Ovary (tissue), 10 donors: ENCODE measurements at regions of chr11 and their contacts with region 1.

Region 1: DNA sequence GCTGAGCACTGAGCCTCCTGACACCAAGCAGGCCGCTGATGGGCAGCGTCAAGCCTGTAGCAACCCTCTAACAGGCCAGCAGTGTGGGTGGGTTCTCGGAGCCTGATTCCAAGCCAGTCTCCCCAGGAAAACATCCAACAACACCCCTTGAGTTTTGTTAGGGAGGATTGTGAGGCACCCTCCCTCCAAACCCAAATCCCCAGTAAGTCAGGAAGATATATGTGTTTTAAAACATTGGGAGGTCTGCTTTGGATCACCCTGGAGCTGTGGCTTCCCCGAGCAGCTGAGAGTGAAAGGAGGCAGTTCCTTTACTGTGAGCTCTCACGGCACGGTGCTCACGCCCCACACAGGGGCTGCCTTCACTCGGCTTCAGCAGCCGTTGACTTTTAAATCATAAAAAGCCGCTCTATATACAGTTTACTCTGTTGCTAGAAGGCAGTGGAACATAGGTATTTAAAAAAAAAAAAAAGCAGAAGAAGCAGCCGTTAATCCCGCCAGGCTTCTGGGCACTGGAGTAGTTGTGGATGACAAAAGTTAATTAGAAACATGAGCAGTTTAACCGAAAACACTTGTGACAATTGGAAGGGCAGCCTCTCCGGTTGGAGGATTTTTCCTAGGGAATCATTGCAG is 218.6 kb downstream of the NAV2 start:
- DNase-seq: peak in 4 of 5 donors; percentile 29 to 51 (median 44)
- H3K4me3 ChIP-seq: no peak overlapping the region
- H3K27ac ChIP-seq: peak overlapping the region; percentile 67 to 76
- H3K4me1 ChIP-seq: peaks cover 24% of the 10 kb centered on the region
- H3K27me3 ChIP-seq: no peaks in the 10 kb centered on the region
- CTCF ChIP-seq: no peak
- EP300 ChIP-seq: no peak
- POLR2A ChIP-seq: no peak

Region 2: GRCh38 chr11:19814421-19814820 is 116.8 kb before region 1 on chr11:
- intact Hi-C with region 1: no loop called
- DNase-seq: no peak
- H3K4me3 ChIP-seq: no peak overlapping the region
- H3K27ac ChIP-seq: no peak overlapping the region
- H3K4me1 ChIP-seq: no peaks in the 10 kb centered on the region
- H3K27me3 ChIP-seq: no peaks in the 10 kb centered on the region
- CTCF ChIP-seq: no peak
- EP300 ChIP-seq: no peak
- POLR2A ChIP-seq: no peak

Region 3: GRCh38 chr11:19951558-19952115 is 20.4 kb after region 1 on chr11:
- intact Hi-C with region 1: no loop called
- DNase-seq: no peak
- H3K4me3 ChIP-seq: no peak overlapping the region
- H3K27ac ChIP-seq: peak overlapping the region in 1 of 2 donors; percentile 36
- H3K4me1 ChIP-seq: peaks cover 4% of the 10 kb centered on the region
- H3K27me3 ChIP-seq: no peaks in the 10 kb centered on the region
- CTCF ChIP-seq: peak; percentile 18 to 73 (median 73)
- EP300 ChIP-seq: no peak
- POLR2A ChIP-seq: no peak

Region 4: GRCh38 chr11:19995131-19995530 is 63.9 kb after region 1 on chr11:
- intact Hi-C with region 1: loop called in 1 of 4 experiments (anchors 2 kb)
- DNase-seq: no peak
- H3K4me3 ChIP-seq: no peak overlapping the region
- H3K27ac ChIP-seq: peak overlapping the region in 1 of 2 donors; percentile 36
- H3K4me1 ChIP-seq: peaks cover 14% of the 10 kb centered on the region
- H3K27me3 ChIP-seq: no peaks in the 10 kb centered on the region
- CTCF ChIP-seq: no peak
- EP300 ChIP-seq: no peak
- POLR2A ChIP-seq: no peak